ENCODE measurements at regions of chr5 and their contacts with region 1.

Region 1: DNA sequence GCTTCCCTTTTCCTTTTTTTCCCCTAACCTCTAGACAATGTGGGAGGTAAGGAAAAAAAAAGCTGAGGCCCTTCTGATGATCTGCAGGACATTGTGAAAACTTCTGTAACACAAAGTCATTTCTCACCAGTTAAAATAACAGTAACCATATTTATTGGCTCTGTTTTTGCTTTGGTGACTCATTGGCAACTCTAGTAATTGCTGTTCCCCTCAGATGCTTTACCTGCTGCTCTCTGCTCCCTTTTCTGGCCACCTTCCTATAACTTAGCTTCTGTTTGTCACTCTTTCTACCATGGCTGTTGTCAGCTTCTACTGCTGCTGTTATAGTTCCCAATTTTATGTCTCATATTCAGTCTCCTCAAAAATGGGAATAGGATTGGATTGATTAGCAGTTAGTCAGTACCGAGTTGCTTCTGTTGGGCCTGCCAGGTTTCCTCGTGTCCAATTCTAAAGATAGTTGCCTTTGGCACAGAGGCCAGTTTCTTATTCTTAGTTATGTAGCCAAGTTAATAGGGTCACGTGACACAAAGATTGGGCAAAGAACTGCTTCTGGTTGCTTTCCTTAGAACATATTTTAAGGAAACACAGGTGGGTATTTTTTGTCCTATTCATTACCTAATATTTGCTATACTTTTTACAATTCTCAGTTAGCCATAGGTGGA is 16.8 kb downstream of the SCAMP1 start:
- DNase-seq: peak; percentile 35
- ATAC-seq: no peak
- H3K4me3 ChIP-seq: no peak overlapping the region
- H3K27ac ChIP-seq: no peak overlapping the region
- H3K4me1 ChIP-seq: peaks cover 8% of the 10 kb centered on the region
- H3K27me3 ChIP-seq: no peaks in the 10 kb centered on the region
- CTCF ChIP-seq: no peak
- POLR2A ChIP-seq: no peak
- RAD21 ChIP-seq: no peak

Region 2: DNA sequence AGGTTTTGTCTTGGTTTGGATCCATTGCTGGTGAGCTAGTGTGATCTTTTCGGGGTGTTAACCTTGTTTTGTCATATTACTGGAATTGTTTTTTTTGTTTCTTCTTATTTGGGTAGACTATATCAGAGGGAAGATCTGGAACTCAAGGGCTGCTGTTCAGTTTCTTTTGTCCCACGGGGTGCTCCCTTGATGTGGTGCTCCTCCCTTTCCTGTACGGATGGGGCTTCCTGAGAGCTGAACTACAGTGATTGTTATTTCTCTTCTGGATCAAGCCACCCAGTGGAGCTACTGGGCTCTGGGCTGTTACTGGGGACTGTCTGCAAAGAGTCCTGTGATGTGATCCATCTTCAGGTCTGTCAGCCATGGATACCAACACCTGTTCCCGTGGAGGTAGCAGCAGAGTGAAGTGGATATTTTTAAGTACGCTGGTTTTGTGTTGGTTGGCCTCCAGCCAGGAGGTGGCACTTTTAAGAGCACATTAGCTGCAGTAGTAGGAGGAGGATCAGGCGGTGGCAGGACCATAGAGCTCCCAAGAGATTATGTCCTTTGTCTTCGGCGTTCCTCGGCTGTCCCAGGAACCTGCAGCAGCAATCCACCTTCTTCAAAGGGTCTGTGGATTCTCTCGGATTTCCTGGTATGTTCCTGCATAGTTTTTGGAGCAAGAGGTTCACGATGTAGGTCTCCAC is 10.4 kb after region 1 on chr5:
- CTCF ChIA-PET with region 1: no interaction called
- POLR2A ChIA-PET with region 1: no interaction called
- dilution Hi-C with region 1: no loop called
- in situ Hi-C with region 1: no loop called
- intact Hi-C with region 1: loop called (anchors 2 kb)
- DNase-seq: no peak
- ATAC-seq: no peak
- H3K4me3 ChIP-seq: no peak overlapping the region
- H3K27ac ChIP-seq: no peak overlapping the region
- H3K4me1 ChIP-seq: no peaks in the 10 kb centered on the region
- H3K27me3 ChIP-seq: no peaks in the 10 kb centered on the region
- CTCF ChIP-seq: no peak
- POLR2A ChIP-seq: no peak
- RAD21 ChIP-seq: no peak

Region 3: GRCh38 chr5:78416677-78417425 is 39.7 kb after region 1 on chr5:
- CTCF ChIA-PET with region 1: no interaction called
- POLR2A ChIA-PET with region 1: no interaction called
- dilution Hi-C with region 1: no loop called
- in situ Hi-C with region 1: no loop called
- intact Hi-C with region 1: loop called (anchors 5 kb)
- DNase-seq: peak; percentile 43
- ATAC-seq: no peak
- H3K4me3 ChIP-seq: no peak overlapping the region
- H3K27ac ChIP-seq: no peak overlapping the region
- H3K4me1 ChIP-seq: no peaks in the 10 kb centered on the region; the same call in 1 of the 2 replicates
- H3K27me3 ChIP-seq: no peaks in the 10 kb centered on the region
- CTCF ChIP-seq: no peak
- POLR2A ChIP-seq: no peak
- RAD21 ChIP-seq: no peak

Region 4: DNA sequence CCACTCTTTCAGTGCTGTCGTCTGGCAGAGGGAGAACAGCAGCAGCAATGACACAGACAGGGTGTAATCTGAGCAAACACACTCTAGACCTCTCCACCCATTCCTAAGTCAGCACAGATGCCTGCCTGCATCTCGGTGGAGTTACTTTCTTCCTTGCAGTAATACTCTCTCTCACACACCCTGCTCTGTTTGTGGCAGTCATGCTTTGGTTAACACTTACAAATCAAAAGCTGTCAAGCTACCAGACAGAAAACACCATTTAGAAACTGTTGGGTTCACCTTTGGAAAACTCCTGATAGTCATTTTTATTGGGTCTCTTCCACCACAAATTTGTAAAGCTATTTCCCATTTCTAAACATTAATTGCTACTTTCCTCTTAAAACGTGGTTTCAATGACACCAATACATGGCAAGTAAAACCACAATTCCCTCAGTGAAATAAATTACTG is 244.1 kb after region 1 on chr5:
- CTCF ChIA-PET with region 1: no interaction called
- POLR2A ChIA-PET with region 1: no interaction called
- dilution Hi-C with region 1: no loop called
- in situ Hi-C with region 1: no loop called
- intact Hi-C with region 1: no loop called
- DNase-seq: peak; percentile 56
- ATAC-seq: peak; percentile 84
- H3K4me3 ChIP-seq: no peak overlapping the region
- H3K27ac ChIP-seq: no peak overlapping the region
- H3K4me1 ChIP-seq: peaks cover 5% of the 10 kb centered on the region
- H3K27me3 ChIP-seq: no peaks in the 10 kb centered on the region
- CTCF ChIP-seq: no peak
- POLR2A ChIP-seq: no peak
- RAD21 ChIP-seq: no peak

Region 5: DNA sequence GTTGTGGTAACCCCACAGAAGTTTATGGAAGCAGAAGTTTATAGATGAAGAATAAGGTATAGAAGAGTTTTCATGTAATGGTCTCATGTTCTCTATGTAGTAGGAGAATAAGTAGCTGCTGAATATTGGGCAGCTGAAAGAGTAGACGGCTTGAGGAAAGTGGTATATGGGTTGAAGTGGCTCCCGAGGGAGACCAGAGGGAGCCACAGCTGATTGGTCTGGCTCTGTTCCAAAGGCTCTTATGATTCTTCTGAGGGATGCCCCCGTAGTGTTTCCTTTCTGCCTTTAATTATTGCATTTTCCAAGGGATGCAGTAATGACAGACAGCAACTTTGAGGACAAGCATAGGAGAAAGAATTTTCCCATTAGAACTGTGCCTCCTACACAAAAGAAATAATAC is 1205.0 kb after region 1 on chr5:
- CTCF ChIA-PET with region 1: no interaction called
- POLR2A ChIA-PET with region 1: no interaction called
- dilution Hi-C with region 1: no loop called
- in situ Hi-C with region 1: no loop called
- intact Hi-C with region 1: no loop called
- DNase-seq: no peak
- ATAC-seq: no peak
- H3K4me3 ChIP-seq: no peak overlapping the region
- H3K27ac ChIP-seq: no peak overlapping the region
- H3K4me1 ChIP-seq: no peaks in the 10 kb centered on the region
- H3K27me3 ChIP-seq: peaks cover 1% of the 10 kb centered on the region
- CTCF ChIP-seq: no peak
- POLR2A ChIP-seq: no peak
- RAD21 ChIP-seq: no peak